WTC11 (cell line): ENCODE measurements at regions of chr19 and their contacts with region 1.

Region 1: GRCh38 chr19:57435062-57435978 is at the start of gene ZNF749:
- DNase-seq: peak; percentile 99
- ATAC-seq: peak; percentile 91
- H3K4me3 Mint-ChIP-seq: peak within 1 kb of the TSS; percentile 87
- H3K27ac Mint-ChIP-seq: peak within 1 kb of the TSS; percentile 97
- H3K4me1 Mint-ChIP-seq: peaks cover 18% of the 10 kb centered on the region
- H3K27me3 Mint-ChIP-seq: no peaks in the 10 kb centered on the region
- CTCF ChIP-seq: no peak
- total RNA-seq, gene ZNF749: 32.3 to 34.7 TPM (median 34.6 TPM) in 3 replicates

Region 2: GRCh38 chr19:57406516-57407123 is 28.7 kb before region 1 on chr19:
- CTCF ChIA-PET with region 1: interaction called, 11 read pairs
- POLR2A ChIA-PET with region 1: no interaction called
- DNase-seq: peak; percentile 92
- ATAC-seq: peak; percentile 86
- H3K4me3 Mint-ChIP-seq: no peak overlapping the region
- H3K27ac Mint-ChIP-seq: no peak overlapping the region
- H3K4me1 Mint-ChIP-seq: peaks cover 8% of the 10 kb centered on the region
- H3K27me3 Mint-ChIP-seq: peaks cover 7% of the 10 kb centered on the region
- CTCF ChIP-seq: peak; percentile 30

Region 3: DNA sequence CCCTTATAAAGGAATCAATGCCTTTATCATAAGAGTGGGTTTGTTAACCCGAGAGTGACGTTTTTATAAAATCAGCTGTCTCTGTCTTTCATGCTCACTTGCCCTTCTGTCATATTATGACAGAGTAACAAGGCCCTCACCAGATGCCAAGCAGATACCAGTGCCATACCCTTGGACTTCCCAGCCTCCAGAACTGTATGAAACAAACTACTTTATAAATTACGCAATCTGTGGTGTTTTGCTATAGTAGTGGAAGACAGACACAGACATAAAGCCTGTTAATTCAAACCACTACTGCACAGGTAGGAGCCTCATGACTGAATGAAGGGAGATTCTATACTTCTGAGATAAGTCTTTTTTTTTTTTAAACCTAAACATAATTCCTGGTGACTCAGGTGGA is 17.0 kb after region 1 on chr19:
- CTCF ChIA-PET with region 1: no interaction called
- POLR2A ChIA-PET with region 1: no interaction called
- DNase-seq: no peak
- ATAC-seq: no peak
- H3K4me3 Mint-ChIP-seq: no peak overlapping the region
- H3K27ac Mint-ChIP-seq: no peak overlapping the region
- H3K4me1 Mint-ChIP-seq: no peaks in the 10 kb centered on the region
- H3K27me3 Mint-ChIP-seq: no peaks in the 10 kb centered on the region
- CTCF ChIP-seq: no peak